Naive thymus-derived CD8-positive, alpha-beta T cell (primary cell): ENCODE measurements at regions of chr16 and their contacts with region 1.

Region 1: GRCh38 chr16:57416122-57416509 is 11.5 kb downstream of the CCL17 start:
- DNase-seq: no peak
- ATAC-seq: no peak
- H3K4me3 Mint-ChIP-seq: no peak overlapping the region
- H3K27ac Mint-ChIP-seq: peak overlapping the region in 4 of 10 donors; percentile 23 to 93 (median 52)
- H3K4me1 Mint-ChIP-seq: peaks cover 13 to 44% (median 36%) of the 10 kb centered on the region in 4 donors
- H3K27me3 Mint-ChIP-seq: no peaks in the 10 kb centered on the region

Region 2: GRCh38 chr16:57300387-57301125 is 115.6 kb before region 1 on chr16:
- POLR2A ChIA-PET with region 1: interaction called, 43 read pairs
- DNase-seq: peak; percentile 92 to 100 (median 99)
- ATAC-seq: peak; percentile 86
- H3K4me3 Mint-ChIP-seq: no peak overlapping the region
- H3K27ac Mint-ChIP-seq: no peak overlapping the region
- H3K4me1 Mint-ChIP-seq: peaks cover 4 to 18% (median 15%) of the 10 kb centered on the region in 4 donors
- H3K27me3 Mint-ChIP-seq: no peaks in the 10 kb centered on the region

Region 3: DNA sequence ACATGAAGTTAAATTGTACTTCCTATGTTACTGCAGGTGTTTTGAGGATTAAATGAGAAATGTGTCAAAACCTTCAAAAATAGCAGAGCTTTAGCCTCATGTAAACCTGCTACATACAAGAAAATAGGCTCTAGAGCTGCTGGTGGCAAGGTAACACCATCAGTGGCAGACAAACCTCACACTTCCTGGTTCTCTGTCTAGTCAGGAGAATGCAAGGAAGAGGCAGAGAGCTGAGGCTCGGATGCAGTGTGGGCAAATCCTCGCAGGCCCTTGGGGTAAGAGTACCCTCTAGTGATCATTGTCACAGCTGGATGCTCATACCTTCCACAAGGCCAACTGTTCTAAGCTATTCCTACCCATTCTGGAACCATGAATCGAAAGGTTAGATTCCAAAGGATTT is 16.9 kb after region 1 on chr16:
- POLR2A ChIA-PET with region 1: interaction called, 11 read pairs
- DNase-seq: peak in 2 of 10 donors; percentile 17 to 22
- ATAC-seq: peak; percentile 43 to 60
- H3K4me3 Mint-ChIP-seq: peak overlapping the region; percentile 32 to 79 (median 67)
- H3K27ac Mint-ChIP-seq: peak overlapping the region; percentile 73 to 94 (median 90)
- H3K4me1 Mint-ChIP-seq: peaks cover 21 to 50% (median 31%) of the 10 kb centered on the region in 4 donors
- H3K27me3 Mint-ChIP-seq: no peaks in the 10 kb centered on the region

Region 4: DNA sequence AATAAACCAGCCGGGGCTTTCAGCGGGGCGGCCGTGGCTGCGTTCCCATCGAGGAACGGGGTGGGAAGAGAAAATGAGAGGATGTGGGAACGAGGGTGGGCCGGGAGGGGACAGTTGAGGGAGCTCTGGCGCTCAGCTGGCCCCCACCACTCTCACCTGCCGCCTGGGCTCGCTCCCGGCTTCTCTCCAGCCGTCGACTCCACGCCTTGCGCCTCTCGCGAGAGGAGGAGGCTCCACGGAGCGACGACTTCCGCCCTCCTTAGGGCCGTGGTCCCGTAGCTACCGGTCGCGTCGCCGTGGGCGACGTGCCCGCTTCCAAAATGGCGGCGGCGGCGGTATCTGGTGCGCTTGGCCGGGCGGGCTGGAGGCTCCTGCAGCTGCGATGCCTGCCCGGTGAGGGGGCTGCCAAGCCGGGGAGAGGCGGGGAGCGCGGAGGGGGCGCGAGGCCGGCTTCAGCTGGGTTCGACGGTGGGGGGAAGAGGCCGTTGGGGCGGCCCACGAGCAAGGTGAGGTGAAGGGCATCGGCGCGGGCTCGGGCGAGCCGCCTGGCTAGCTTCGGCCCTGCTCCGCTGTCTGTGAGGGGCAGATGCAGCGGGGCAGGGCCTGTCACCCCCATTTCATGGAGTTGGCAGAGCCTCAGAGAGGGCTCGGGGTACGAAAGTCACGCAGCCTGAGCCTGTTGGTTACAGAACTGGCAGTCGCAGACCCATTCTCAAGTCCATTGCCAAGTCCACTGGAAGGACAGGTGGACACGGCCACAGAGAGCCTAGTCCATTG is 31.3 kb after region 1 on chr16 and contains the starts of genes CIAPIN1 and COQ9:
- POLR2A ChIA-PET with region 1: interaction called, 12 read pairs
- DNase-seq: peak; percentile 81 to 96 (median 92)
- ATAC-seq: peak; percentile 98 to 99
- H3K4me3 Mint-ChIP-seq: peak within 1 kb of the TSS; percentile 89 to 96 (median 92)
- H3K27ac Mint-ChIP-seq: peak within 1 kb of the TSS; percentile 84 to 97 (median 92)
- H3K4me1 Mint-ChIP-seq: peaks cover 15 to 55% (median 41%) of the 10 kb centered on the region in 4 donors
- H3K27me3 Mint-ChIP-seq: no peaks in the 10 kb centered on the region
- polyA plus RNA-seq, gene CIAPIN1: 81.1 to 143 (median 108) TPM
- polyA plus RNA-seq, gene COQ9: 22.8 to 59.0 (median 29.7) TPM

Region 5: DNA sequence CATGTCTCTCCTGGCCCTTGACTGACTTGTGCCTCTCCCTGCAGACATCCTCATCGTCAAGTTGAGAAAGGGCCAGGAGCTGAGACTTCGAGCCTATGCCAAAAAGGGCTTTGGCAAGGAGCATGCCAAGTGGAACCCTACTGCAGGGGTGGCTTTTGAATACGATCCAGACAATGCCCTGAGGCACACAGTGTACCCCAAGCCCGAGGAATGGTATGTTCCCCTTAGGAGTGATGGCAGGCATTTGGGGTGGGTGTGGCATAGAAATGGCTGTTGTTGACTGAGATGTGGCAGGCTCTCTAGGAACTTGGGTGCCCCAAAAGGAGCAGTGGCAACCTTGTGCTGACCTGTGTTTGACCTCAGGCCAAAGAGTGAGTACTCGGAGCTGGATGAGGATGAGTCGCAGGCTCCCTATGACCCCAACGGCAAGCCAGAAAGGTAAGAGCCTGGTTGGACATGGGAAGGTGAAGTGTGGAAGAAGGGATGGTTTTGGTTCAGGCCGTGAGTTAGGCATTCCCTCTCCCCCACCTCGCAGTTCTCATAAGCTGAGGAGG is 53.9 kb after region 1 on chr16:
- POLR2A ChIA-PET with region 1: no interaction called
- DNase-seq: no peak
- ATAC-seq: no peak
- H3K4me3 Mint-ChIP-seq: no peak overlapping the region
- H3K27ac Mint-ChIP-seq: peak overlapping the region in 1 of 10 donors; percentile 27
- H3K4me1 Mint-ChIP-seq: peaks cover 5 to 20% (median 12%) of the 10 kb centered on the region in 4 donors
- H3K27me3 Mint-ChIP-seq: no peaks in the 10 kb centered on the region